H1 (cell line): ENCODE measurements at regions of chr12 and their contacts with region 1.

Region 1: DNA sequence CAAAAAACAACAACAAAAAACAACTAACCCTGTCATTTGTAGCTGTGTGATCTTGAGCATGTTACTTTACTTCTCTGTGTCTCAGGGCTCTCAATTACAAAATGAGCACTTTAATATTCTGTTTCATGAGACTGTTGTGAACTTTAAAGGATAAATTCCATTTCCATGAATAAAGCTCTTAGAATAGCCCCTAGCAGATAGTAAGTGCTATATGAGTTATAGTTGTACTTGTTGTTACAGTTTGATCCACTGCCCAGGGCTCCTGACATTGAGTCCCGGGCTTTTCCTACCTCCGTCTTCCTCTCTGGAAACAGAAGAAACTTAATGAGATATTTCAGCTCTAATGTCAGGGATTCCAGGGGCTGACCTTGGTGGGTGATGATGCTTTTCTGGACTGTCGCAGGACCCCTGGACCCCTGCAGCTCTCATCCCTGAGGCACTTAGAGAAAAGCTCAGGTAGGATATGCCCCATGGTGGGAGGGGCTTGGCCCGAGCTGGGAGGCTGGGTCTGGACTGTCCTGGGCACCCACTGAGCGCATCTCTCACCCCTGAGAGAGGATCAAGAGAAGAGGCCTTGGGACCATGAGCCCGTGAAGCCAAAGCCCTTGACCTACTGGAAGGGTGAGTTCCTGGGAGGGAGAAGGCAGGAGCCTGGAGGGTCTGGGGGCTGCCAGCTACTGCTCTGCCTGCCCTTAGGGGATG is 5.1 kb downstream of the P3H3 start:
- DNase-seq: no peak
- H3K4me3 ChIP-seq: no peak overlapping the region
- H3K27ac ChIP-seq: no peak overlapping the region
- H3K4me1 ChIP-seq: peaks cover 0 to 8% (median 4%) of the 10 kb centered on the region in 4 experiments; a peak in 5 of 7 replicates
- H3K27me3 ChIP-seq: no peaks in the 10 kb centered on the region
- CTCF ChIP-seq: no peak
- EP300 ChIP-seq: no peak
- POLR2A ChIP-seq: no peak
- RAD21 ChIP-seq: no peak

Region 2: GRCh38 chr12:6735448-6736191 is 97.7 kb before region 1 on chr12:
- CTCF ChIA-PET with region 1: interaction called, 11 read pairs
- POLR2A ChIA-PET with region 1: interaction called, 4 read pairs
- DNase-seq: peak in 1 of 2 experiments; percentile 62
- H3K4me3 ChIP-seq: no peak overlapping the region
- H3K27ac ChIP-seq: no peak overlapping the region
- H3K4me1 ChIP-seq: peaks cover 0 to 5% (median 0%) of the 10 kb centered on the region in 4 experiments; a peak in 1 of 7 replicates
- H3K27me3 ChIP-seq: no peaks in the 10 kb centered on the region
- CTCF ChIP-seq: peak; percentile 62 to 63 (median 63)
- EP300 ChIP-seq: no peak
- POLR2A ChIP-seq: no peak
- RAD21 ChIP-seq: peak; percentile 62 to 73

Region 3: DNA sequence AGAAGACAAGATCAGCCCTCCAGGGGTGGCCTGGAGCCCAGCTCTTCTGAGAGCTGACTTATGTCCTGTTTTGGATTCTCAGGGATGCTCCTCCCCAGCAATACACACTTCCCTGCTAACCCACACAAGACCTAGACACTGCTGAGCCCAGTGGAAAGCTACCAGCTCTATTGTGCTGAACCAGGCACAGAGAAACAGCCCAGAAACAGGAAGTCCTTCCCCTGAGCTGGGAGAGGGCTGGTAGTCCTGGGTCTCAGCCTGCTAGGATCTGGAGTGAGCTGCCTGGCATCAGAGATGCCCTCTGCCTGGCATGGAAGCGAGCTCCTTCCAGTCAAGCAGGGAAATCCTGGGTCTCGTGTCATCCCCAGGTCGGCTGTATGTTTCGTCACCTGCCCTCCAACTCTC is 62.2 kb before region 1 on chr12:
- CTCF ChIA-PET with region 1: interaction called, 532 read pairs
- POLR2A ChIA-PET with region 1: interaction called, 56 read pairs
- DNase-seq: no peak
- H3K4me3 ChIP-seq: no peak overlapping the region
- H3K27ac ChIP-seq: no peak overlapping the region
- H3K4me1 ChIP-seq: peaks cover 4 to 36% (median 25%) of the 10 kb centered on the region in 4 experiments
- H3K27me3 ChIP-seq: peaks cover 0 to 27% (median 21%) of the 10 kb centered on the region in 4 experiments; a peak in 5 of 7 replicates
- CTCF ChIP-seq: no peak
- EP300 ChIP-seq: no peak
- POLR2A ChIP-seq: no peak
- RAD21 ChIP-seq: no peak

Region 4: GRCh38 chr12:6950811-6951540 is 117.6 kb after region 1 on chr12 and contains the start of gene PTPN6:
- CTCF ChIA-PET with region 1: no interaction called
- POLR2A ChIA-PET with region 1: no interaction called
- DNase-seq: no peak
- H3K4me3 ChIP-seq: no peak within 1 kb of the TSS
- H3K27ac ChIP-seq: no peak within 1 kb of the TSS; the same call in 1 of the 2 replicates
- H3K4me1 ChIP-seq: peaks cover 0 to 21% (median 11%) of the 10 kb centered on the region in 4 experiments; a peak in 6 of 7 replicates
- H3K27me3 ChIP-seq: no peaks in the 10 kb centered on the region
- CTCF ChIP-seq: no peak
- EP300 ChIP-seq: no peak
- POLR2A ChIP-seq: no peak
- RAD21 ChIP-seq: no peak
- total RNA-seq, gene PTPN6: 25.7 and 28.4 TPM in 2 replicates